ENCODE measurements at regions of chr1 and their contacts with region 1.

Region 1: DNA sequence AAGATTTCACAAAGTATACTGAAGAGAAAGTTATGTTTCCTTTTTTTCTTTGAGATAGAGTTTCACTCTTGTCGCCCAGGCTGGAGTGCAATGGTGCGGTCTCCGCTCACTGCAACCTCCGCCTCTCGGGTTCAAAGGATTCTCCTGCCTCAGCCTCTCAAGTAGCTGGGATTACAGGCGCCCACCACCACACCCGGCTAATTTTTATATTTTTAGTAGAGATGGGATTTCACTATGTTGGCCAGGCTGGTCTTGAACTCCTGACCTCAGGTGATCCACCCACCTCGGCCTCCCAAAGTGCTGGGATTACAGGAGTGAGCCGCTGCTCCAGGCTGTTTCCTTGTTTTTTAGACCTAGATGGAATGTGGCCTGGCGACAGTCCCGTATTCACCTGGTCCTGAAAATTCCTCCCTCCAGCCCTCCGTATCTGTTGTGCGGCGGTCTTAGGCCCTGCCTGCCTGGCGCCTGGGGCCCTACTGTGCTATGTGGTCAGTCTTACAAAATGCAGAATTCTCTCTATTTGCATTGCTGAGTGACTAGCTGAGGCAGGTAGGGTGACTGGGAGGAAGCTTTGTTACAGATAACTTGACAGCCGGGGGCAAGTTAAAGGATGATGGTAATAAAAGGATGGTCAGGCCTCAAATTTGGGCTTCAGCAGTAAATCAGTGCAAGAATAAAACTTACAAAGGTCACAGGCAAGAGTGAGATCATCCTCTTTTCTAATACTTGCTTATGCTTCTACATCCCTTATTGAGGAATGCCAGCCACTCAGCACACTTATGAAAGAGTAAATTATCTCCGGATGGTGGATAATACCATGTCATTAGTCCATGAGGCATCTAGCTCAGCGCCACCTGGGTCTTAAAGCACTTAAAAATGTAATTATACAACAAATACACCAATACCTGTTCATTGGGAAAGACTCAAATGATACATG is 30.3 kb downstream of the PARK7 start:
- DNase-seq: no peak
- ATAC-seq: no peak
- H3K4me3 Mint-ChIP-seq: no peak overlapping the region
- H3K27ac Mint-ChIP-seq: no peak overlapping the region
- H3K4me1 Mint-ChIP-seq: peaks cover 12% of the 10 kb centered on the region
- H3K27me3 Mint-ChIP-seq: no peaks in the 10 kb centered on the region
- CTCF ChIP-seq: no peak

Region 2: GRCh38 chr1:8324176-8324810 is 332.5 kb after region 1 on chr1:
- CTCF ChIA-PET with region 1: no interaction called
- POLR2A ChIA-PET with region 1: interaction called, 13 read pairs
- intact Hi-C with region 1: no loop called
- DNase-seq: no peak
- ATAC-seq: no peak
- H3K4me3 Mint-ChIP-seq: no peak overlapping the region
- H3K27ac Mint-ChIP-seq: no peak overlapping the region
- H3K4me1 Mint-ChIP-seq: peaks cover 1% of the 10 kb centered on the region
- H3K27me3 Mint-ChIP-seq: peaks cover 3% of the 10 kb centered on the region
- CTCF ChIP-seq: no peak